Right ventricle myocardium inferior (tissue), 1 donor: ENCODE measurements at regions of chr9 and their contacts with region 1.

Region 1: DNA sequence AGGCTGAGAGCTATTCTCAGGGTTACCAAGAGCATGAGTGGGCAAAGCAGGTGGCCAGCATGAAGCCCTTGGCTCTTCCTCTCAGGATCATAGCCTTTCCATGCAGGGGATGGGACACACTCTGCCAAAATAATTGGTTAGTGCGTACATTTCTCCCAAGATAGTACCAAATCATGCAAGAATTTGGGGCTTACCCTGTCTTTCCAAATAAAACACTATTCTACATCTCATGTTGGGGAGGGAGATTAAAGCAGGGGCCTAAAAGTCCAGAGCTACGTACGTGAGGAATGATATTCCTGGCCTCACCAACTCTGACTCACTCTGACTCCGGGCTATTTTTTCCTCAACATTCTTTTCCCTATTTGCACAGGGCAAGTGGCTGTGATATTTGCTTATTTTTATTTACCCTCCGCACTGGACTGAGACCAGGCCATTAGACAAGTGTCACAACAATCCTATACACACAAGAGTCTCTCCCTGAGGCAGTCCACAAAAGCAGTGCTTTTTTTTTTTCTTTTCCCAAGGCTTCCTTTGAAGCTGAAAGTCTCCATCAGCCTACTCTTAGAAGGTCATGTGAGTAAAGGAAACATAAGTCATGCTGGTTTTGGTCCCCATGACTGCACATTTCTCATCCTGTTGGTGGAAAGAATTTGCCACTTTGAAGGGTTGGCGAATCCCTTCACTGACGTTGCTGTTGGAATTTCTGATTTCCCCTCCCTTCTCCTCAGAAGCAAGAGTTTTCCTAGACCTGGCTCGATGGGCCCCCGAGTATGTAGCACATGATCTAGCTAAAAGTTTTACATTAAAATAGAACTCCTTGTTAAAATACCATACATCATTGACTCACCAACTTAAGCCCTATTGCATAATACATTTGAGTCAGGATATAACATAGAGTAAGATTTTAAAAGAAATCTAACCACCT is 40.0 kb downstream of the TMEM252 start:
- DNase-seq: no peak
- ATAC-seq: peak; percentile 70

Region 2: GRCh38 chr9:68416936-68417564 is 83.7 kb before region 1 on chr9:
- intact Hi-C with region 1: loop called (anchors 5 kb)
- DNase-seq: no peak
- ATAC-seq: no peak

Region 3: GRCh38 chr9:68462105-68462775 is 38.5 kb before region 1 on chr9:
- intact Hi-C with region 1: loop called (anchors 5 kb)
- DNase-seq: no peak
- ATAC-seq: no peak

Region 4: GRCh38 chr9:68538200-68538599 is 37.5 kb after region 1 on chr9:
- intact Hi-C with region 1: loop called (anchors 5 kb)
- DNase-seq: no peak
- ATAC-seq: peak; percentile 93